ENCODE measurements at regions of chr5 and their contacts with region 1.

Region 1: GRCh38 chr5:180291943-180292831 is at the start of gene MAPK9:
- DNase-seq: peak; percentile 65
- H3K4me3 ChIP-seq: peak within 1 kb of the TSS; percentile 67 to 88 (median 82)
- H3K27ac ChIP-seq: peak within 1 kb of the TSS; percentile 3
- H3K4me1 ChIP-seq: peaks cover 6% of the 10 kb centered on the region
- H3K27me3 ChIP-seq: no peaks in the 10 kb centered on the region
- CTCF ChIP-seq: no peak
- POLR2A ChIP-seq: peak; percentile 28
- total RNA-seq, gene MAPK9: 34.8 and 38.0 TPM in 2 replicates

Region 2: GRCh38 chr5:180259260-180259681 is 32.9 kb before region 1 on chr5:
- CTCF ChIA-PET with region 1: no interaction called
- POLR2A ChIA-PET with region 1: no interaction called
- dilution Hi-C with region 1: no loop called
- intact Hi-C with region 1: no loop called
- DNase-seq: no peak
- H3K4me3 ChIP-seq: no peak overlapping the region
- H3K27ac ChIP-seq: no peak overlapping the region
- H3K4me1 ChIP-seq: no peaks in the 10 kb centered on the region
- H3K27me3 ChIP-seq: no peaks in the 10 kb centered on the region
- CTCF ChIP-seq: no peak
- POLR2A ChIP-seq: no peak

Region 3: GRCh38 chr5:180315762-180316212 is 23.6 kb after region 1 on chr5:
- CTCF ChIA-PET with region 1: interaction called, 69 read pairs
- POLR2A ChIA-PET with region 1: no interaction called
- dilution Hi-C with region 1: no loop called
- intact Hi-C with region 1: loop called (anchors 1 kb)
- DNase-seq: peak; percentile 58
- H3K4me3 ChIP-seq: no peak overlapping the region
- H3K27ac ChIP-seq: no peak overlapping the region
- H3K4me1 ChIP-seq: peaks cover 2% of the 10 kb centered on the region
- H3K27me3 ChIP-seq: no peaks in the 10 kb centered on the region
- CTCF ChIP-seq: peak; percentile 96 to 98
- POLR2A ChIP-seq: no peak

Region 4: GRCh38 chr5:180353048-180353979 is 61.1 kb after region 1 on chr5 and contains the start of gene GFPT2:
- CTCF ChIA-PET with region 1: interaction called, 4 read pairs
- POLR2A ChIA-PET with region 1: no interaction called
- dilution Hi-C with region 1: no loop called
- intact Hi-C with region 1: loop called (anchors 1 kb)
- DNase-seq: peak; percentile 65
- H3K4me3 ChIP-seq: peak within 1 kb of the TSS; percentile 56 to 74 (median 70)
- H3K27ac ChIP-seq: peak within 1 kb of the TSS; percentile 34
- H3K4me1 ChIP-seq: peaks cover 8% of the 10 kb centered on the region
- H3K27me3 ChIP-seq: peaks cover 7 to 30% of the 10 kb centered on the region in 2 experiments
- CTCF ChIP-seq: no peak
- POLR2A ChIP-seq: no peak
- total RNA-seq, gene GFPT2: 4.5 and 5.5 TPM in 2 replicates

Region 5: DNA sequence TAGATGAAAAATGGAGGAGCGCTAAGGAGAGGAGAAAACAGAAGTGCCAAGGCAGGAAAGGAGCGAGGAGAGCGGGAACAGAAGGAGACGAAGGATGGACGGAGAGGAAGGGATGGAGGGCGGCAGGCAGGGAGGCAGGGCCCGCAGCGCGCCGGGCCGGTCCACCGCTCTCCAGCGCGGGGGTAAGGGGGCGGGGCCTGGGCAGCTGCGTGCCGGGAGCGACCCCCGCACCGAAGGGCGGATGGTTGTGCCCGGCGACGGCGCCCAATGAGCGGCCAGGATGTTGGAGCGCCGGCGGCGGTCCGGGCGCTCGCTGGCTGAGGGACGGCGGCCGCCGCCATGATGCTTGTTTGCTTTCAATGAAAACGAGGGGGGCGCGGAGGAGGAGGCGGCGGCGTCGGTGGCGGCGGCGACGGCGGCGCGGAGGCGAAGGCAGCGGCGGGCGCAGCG is 201.9 kb after region 1 on chr5 and contains the start of gene CNOT6:
- CTCF ChIA-PET with region 1: no interaction called
- POLR2A ChIA-PET with region 1: no interaction called
- dilution Hi-C with region 1: no loop called
- intact Hi-C with region 1: loop called (anchors 2 kb)
- DNase-seq: peak; percentile 93
- H3K4me3 ChIP-seq: peak within 1 kb of the TSS; percentile 86 to 90 (median 87)
- H3K27ac ChIP-seq: peak within 1 kb of the TSS; percentile 74
- H3K4me1 ChIP-seq: peaks cover 7% of the 10 kb centered on the region
- H3K27me3 ChIP-seq: no peaks in the 10 kb centered on the region
- CTCF ChIP-seq: no peak
- POLR2A ChIP-seq: no peak
- total RNA-seq, gene CNOT6: 33.8 and 35.5 TPM in 2 replicates

Region 6: DNA sequence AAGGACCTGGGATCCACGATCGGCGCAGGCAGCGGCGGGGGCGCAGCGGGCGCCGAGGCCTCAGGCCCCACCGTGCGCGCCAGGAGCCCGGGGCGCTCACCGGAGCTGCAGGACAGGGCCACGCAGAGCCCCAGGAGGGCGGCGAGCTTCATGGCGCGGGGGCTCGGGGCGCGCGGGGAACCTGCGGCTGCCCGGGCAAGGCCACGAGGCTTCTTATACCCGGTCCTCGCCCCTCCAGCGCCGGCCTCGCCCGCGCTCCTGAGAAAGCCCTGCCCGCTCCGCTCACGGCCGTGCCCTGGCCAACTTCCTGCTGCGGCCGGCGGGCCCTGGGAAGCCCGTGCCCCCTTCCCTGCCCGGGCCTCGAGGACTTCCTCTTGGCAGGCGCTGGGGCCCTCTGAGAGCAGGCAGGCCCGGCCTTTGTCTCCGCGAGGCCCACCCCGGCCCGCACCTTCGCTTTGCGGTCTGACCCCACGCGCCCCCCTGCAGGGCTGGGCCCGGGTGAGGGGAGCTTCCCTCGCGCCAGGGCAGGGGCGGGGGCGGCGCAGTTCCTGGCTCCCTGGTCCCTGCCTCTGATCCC is 299.2 kb after region 1 on chr5 and contains the start of gene SCGB3A1:
- CTCF ChIA-PET with region 1: no interaction called
- POLR2A ChIA-PET with region 1: no interaction called
- dilution Hi-C with region 1: no loop called
- intact Hi-C with region 1: no loop called
- DNase-seq: no peak
- H3K4me3 ChIP-seq: peak within 1 kb of the TSS in 1 of 3 experiments; percentile 2
- H3K27ac ChIP-seq: no peak within 1 kb of the TSS
- H3K4me1 ChIP-seq: no peaks in the 10 kb centered on the region
- H3K27me3 ChIP-seq: peaks cover 21 to 35% of the 10 kb centered on the region in 2 experiments
- CTCF ChIP-seq: no peak
- POLR2A ChIP-seq: no peak
- total RNA-seq, gene SCGB3A1: 0.73 TPM in 1 of 2 replicates, not detected in the other

Region 7: DNA sequence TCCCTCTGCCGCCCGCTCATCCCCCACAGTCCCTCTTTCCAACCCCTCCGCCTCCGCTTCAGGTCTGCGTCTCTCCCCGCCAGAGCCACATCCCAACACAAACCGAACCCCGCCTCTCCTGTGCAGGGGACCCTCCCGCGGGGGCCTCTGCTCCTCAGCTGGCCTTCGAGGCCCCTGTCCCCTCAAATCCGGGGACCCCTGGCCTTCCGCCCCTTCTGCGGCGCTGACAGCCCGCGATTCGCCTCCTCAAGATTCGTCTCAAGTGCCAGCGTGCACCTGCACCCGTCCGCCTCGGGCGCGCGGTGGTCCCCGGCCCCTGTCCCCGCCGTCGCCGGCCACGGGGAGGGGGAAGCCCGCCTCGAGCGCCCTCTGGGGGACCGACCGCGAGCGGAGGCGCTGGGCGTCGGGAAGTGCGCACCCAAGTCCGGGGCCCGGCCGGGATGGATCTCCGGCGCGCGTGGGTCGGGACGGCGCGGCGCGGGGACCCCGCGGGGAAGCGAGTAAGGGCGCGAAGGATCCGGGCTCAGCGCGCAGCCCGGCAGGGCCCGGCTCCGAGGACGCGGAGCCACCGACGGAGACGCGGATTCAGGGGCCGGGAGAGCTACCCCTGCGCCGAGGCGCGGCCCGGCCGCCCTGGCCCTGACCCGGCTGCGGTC is 356.6 kb after region 1 on chr5:
- CTCF ChIA-PET with region 1: no interaction called
- POLR2A ChIA-PET with region 1: no interaction called
- dilution Hi-C with region 1: no loop called
- intact Hi-C with region 1: loop called (anchors 10 kb)
- DNase-seq: no peak
- H3K4me3 ChIP-seq: peak overlapping the region; percentile 21 to 62 (median 30)
- H3K27ac ChIP-seq: no peak overlapping the region
- H3K4me1 ChIP-seq: peaks cover 30% of the 10 kb centered on the region
- H3K27me3 ChIP-seq: peaks cover 3 to 13% of the 10 kb centered on the region in 2 experiments
- CTCF ChIP-seq: peak; percentile 35 to 53
- POLR2A ChIP-seq: no peak